ENCODE measurements at regions of chr16 and their contacts with region 1.

Region 1: GRCh38 chr16:69105489-69106361 is at the start of gene HAS3:
- DNase-seq: peak; percentile 25
- H3K4me3 Mint-ChIP-seq: peak within 1 kb of the TSS; percentile 93
- H3K27ac Mint-ChIP-seq: peak within 1 kb of the TSS; percentile 44
- H3K4me1 Mint-ChIP-seq: peaks cover 7% of the 10 kb centered on the region
- H3K27me3 Mint-ChIP-seq: peaks cover 37% of the 10 kb centered on the region
- total RNA-seq, gene HAS3: 0.73 and 0.93 TPM in 2 replicates

Region 2: GRCh38 chr16:68848786-68849185 is 256.9 kb before region 1 on chr16:
- intact Hi-C with region 1: loop called (anchors 5 kb)
- DNase-seq: no peak
- H3K4me3 Mint-ChIP-seq: no peak overlapping the region
- H3K27ac Mint-ChIP-seq: no peak overlapping the region
- H3K4me1 Mint-ChIP-seq: peaks cover 20% of the 10 kb centered on the region
- H3K27me3 Mint-ChIP-seq: no peaks in the 10 kb centered on the region

Region 3: GRCh38 chr16:68995011-68995504 is 110.7 kb before region 1 on chr16:
- intact Hi-C with region 1: loop called (anchors 10 kb)
- DNase-seq: no peak
- H3K4me3 Mint-ChIP-seq: no peak overlapping the region
- H3K27ac Mint-ChIP-seq: no peak overlapping the region
- H3K4me1 Mint-ChIP-seq: no peaks in the 10 kb centered on the region
- H3K27me3 Mint-ChIP-seq: peaks cover 2% of the 10 kb centered on the region

Region 4: GRCh38 chr16:69057400-69058378 is 48.0 kb before region 1 on chr16:
- intact Hi-C with region 1: no loop called
- DNase-seq: no peak
- H3K4me3 Mint-ChIP-seq: no peak overlapping the region
- H3K27ac Mint-ChIP-seq: no peak overlapping the region
- H3K4me1 Mint-ChIP-seq: peaks cover 10% of the 10 kb centered on the region
- H3K27me3 Mint-ChIP-seq: no peaks in the 10 kb centered on the region